Activated B cell treated with CpG ODN at 0.5 μM for 24 hours (primary cell): ENCODE measurements at regions of chr1 and their contacts with region 1.

Region 1: GRCh38 chr1:241356519-241357365 is at the start of gene RGS7:
- DNase-seq: peak; percentile 33
- ATAC-seq: peak; percentile 66
- H3K4me3 Mint-ChIP-seq: peak within 1 kb of the TSS; percentile 83
- H3K27ac Mint-ChIP-seq: no peak within 1 kb of the TSS
- H3K4me1 Mint-ChIP-seq: peaks cover 12% of the 10 kb centered on the region
- H3K27me3 Mint-ChIP-seq: peaks cover 36% of the 10 kb centered on the region
- CTCF ChIP-seq: no peak
- total RNA-seq, gene RGS7: 0.39 and 0.49 TPM in 2 replicates

Region 2: DNA sequence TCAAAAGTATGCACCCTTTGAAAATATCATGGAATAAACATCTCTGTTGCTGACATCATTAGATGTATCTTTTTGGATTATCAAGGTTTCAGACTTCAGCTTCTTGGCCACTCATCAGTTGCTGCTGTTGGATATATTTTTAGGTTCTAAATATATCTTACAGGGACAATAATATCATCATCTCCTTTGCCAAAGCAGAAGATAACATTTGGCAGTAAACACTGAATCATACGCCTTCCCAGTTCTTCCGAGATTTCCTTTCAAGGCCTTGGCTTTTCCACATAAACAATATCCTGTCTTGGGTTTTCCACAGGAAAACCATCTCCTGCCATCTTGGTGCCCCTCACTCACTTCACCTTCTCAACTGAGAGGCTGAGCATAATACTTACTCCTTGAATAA is 39.1 kb before region 1 on chr1:
- CTCF ChIA-PET with region 1: no interaction called
- POLR2A ChIA-PET with region 1: no interaction called
- intact Hi-C with region 1: loop called (anchors 5 kb)
- DNase-seq: no peak
- ATAC-seq: no peak
- H3K4me3 Mint-ChIP-seq: no peak overlapping the region
- H3K27ac Mint-ChIP-seq: no peak overlapping the region
- H3K4me1 Mint-ChIP-seq: no peaks in the 10 kb centered on the region
- H3K27me3 Mint-ChIP-seq: peaks cover 2% of the 10 kb centered on the region
- CTCF ChIP-seq: no peak

Region 3: GRCh38 chr1:241622669-241623068 is 265.9 kb after region 1 on chr1:
- CTCF ChIA-PET with region 1: no interaction called
- POLR2A ChIA-PET with region 1: no interaction called
- intact Hi-C with region 1: no loop called
- DNase-seq: no peak
- ATAC-seq: no peak
- H3K4me3 Mint-ChIP-seq: no peak overlapping the region
- H3K27ac Mint-ChIP-seq: no peak overlapping the region
- H3K4me1 Mint-ChIP-seq: peaks cover 16% of the 10 kb centered on the region
- H3K27me3 Mint-ChIP-seq: no peaks in the 10 kb centered on the region
- CTCF ChIP-seq: no peak